A549 (cell line): ENCODE measurements at regions of chr3 and their contacts with region 1.

Region 1: DNA sequence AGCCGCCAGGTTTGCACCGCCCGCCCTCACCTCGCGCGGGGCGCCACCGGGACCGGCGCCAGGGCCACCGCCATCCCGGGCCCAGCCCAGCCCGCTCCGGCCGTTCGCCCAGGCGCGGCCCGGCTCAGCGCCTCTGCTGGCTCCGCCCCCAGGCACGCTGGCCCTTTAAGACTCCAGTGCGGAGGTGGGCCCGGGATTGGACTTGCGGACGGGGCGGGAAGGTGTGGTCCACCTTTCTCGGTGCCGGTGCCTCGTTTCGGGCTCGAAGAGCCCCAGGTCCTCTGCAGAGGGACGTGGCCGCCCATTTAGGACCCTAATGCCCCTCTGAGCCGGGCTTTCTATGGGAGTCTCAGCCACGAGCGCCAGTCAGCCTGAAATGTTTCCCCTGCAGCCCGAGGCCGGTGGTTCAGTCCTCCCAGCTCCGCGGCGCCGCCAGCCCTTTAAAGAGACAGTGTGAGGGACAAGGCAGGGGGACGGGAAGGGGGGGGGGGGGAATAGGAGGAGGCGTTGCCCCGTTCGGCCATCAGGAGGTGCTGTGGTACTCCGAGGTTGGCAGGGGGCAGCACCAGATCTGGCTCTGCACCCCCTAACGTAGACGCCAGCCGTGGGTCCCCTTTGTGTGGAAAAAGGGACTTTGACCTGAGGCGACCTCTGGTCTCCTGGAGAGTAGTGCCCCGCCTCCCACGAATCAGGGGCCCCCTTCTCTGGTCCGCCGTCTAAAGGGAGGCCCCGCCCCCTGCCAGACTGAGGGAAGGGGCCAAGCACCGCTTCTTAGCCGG is 1.0 kb downstream of the HYAL2 start:
- DNase-seq: peak; percentile 68 to 88
- ATAC-seq: peak; percentile 80 to 85
- H3K4me3 ChIP-seq: peak overlapping the region; percentile 65
- H3K27ac ChIP-seq: peak overlapping the region; percentile 99 to 100
- H3K4me1 ChIP-seq: peaks cover 30% of the 10 kb centered on the region
- CTCF ChIP-seq: peak; percentile 42; the same call in 2 of the 3 replicates
- EP300 ChIP-seq: no peak
- POLR2A ChIP-seq: peak; percentile 50
- RAD21 ChIP-seq: no peak

Region 2: GRCh38 chr3:50260027-50260941 is 61.2 kb before region 1 on chr3:
- CTCF ChIA-PET with region 1: interaction called, 10 read pairs
- POLR2A ChIA-PET with region 1: no interaction called
- DNase-seq: peak; percentile 68 to 85
- ATAC-seq: peak; percentile 83 to 88
- H3K4me3 ChIP-seq: peak overlapping the region; percentile 85
- H3K27ac ChIP-seq: peak overlapping the region; percentile 94 to 99
- H3K4me1 ChIP-seq: peaks cover 34% of the 10 kb centered on the region
- CTCF ChIP-seq: peak; percentile 83
- EP300 ChIP-seq: no peak
- POLR2A ChIP-seq: peak; percentile 50
- RAD21 ChIP-seq: peak; percentile 57 to 77

Region 3: GRCh38 chr3:50298836-50299637 is 22.5 kb before region 1 on chr3 and contains the starts of genes HYAL3 and NAA80:
- CTCF ChIA-PET with region 1: interaction called, 21 read pairs
- POLR2A ChIA-PET with region 1: no interaction called
- DNase-seq: peak; percentile 80 to 99
- ATAC-seq: peak; percentile 80 to 88
- H3K4me3 ChIP-seq: peak within 1 kb of the TSS; percentile 77
- H3K27ac ChIP-seq: peak within 1 kb of the TSS; percentile 92 to 98
- H3K4me1 ChIP-seq: peaks cover 26% of the 10 kb centered on the region
- CTCF ChIP-seq: no peak
- EP300 ChIP-seq: no peak
- POLR2A ChIP-seq: peak; percentile 87
- RAD21 ChIP-seq: no peak
- polyA plus RNA-seq, gene HYAL3: 3.0 and 5.2 TPM in 2 replicates
- polyA plus RNA-seq, gene NAA80: 3.1 and 4.5 TPM in 2 replicates

Region 4: DNA sequence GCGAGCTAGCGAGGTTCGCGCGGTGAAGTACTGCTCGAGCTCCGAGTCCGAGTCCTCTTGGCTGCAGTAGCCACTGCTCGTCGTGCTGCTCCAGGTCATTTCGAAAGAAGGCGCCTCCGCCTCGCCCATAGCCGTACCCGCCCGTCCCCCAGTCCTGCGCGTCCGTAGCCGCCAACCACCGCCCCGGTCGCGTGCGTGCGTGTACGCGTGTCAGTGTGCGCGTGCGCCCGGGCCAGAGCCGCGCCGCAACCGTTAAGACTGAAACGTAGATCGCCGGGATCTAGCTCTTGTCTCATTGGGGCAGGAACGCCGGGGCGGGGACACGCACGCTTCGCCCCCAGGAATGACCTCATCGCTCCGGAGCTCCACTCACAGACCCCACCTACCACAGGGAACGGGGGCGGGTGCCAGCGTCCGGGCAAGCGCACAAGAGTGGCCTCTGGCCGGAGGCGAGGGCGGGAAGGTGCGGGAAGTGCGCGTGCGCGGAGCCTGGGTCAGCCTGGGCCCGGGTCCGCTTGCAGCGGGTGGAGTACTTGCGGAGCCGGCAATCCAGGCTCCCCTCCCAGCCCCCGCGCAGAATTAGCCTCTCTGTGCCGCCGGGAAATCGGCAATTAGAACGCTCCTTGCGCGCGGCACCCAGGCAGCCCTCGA is 15.8 kb after region 1 on chr3:
- CTCF ChIA-PET with region 1: interaction called, 56 read pairs
- POLR2A ChIA-PET with region 1: interaction called, 4 read pairs
- DNase-seq: peak; percentile 97 to 98
- ATAC-seq: peak; percentile 91 to 93
- H3K4me3 ChIP-seq: peak overlapping the region; percentile 72
- H3K27ac ChIP-seq: peak overlapping the region; percentile 92 to 98
- H3K4me1 ChIP-seq: peaks cover 29% of the 10 kb centered on the region
- CTCF ChIP-seq: no peak
- EP300 ChIP-seq: no peak
- POLR2A ChIP-seq: peak; percentile 67
- RAD21 ChIP-seq: no peak

Region 5: DNA sequence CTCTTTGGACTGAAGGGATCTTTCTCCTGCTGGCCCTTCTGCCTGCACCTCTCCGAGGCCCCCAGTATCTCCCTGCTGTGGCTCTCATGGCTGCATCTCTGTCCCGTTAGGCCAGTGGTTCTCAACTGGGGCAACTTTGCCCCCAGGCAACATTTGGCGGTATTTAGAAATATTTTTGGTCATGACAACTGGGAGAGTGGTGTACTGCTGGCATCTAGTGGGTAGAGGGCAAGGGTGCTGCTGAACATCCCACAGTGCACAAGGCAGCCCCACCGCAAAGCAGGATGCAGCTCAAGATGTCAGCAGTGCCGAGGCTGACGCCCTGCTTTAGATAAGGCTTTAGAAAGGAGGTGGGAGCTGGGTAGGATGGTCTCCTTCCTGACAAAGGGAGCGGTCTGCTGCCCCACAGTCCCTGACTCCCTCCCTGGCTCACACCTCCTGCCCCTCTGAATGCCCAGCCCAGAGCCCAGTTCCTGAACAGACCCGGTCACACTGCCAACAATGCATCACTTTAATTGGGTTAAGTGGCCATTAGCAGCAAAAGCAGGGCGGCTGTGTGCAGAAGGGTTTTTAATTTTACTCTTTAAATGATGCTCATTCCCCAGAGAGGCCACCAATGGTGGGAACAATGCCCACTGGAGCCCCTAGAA is 106.6 kb after region 1 on chr3:
- CTCF ChIA-PET with region 1: no interaction called
- POLR2A ChIA-PET with region 1: no interaction called
- DNase-seq: peak in 1 of 2 experiments; percentile 11
- ATAC-seq: peak in 1 of 2 experiments; percentile 56; a peak in 2 of 6 replicates
- H3K4me3 ChIP-seq: no peak overlapping the region
- H3K27ac ChIP-seq: no peak overlapping the region
- H3K4me1 ChIP-seq: no peaks in the 10 kb centered on the region
- CTCF ChIP-seq: no peak
- EP300 ChIP-seq: no peak
- POLR2A ChIP-seq: no peak
- RAD21 ChIP-seq: 0 out of 5 replicates have a peak, but pooled peaks of 1 of the 2 experiments have one; percentile 6